Dorsolateral prefrontal cortex (tissue), 120 donors: ENCODE measurements at regions of chr19 and their contacts with region 1.

Region 1: DNA sequence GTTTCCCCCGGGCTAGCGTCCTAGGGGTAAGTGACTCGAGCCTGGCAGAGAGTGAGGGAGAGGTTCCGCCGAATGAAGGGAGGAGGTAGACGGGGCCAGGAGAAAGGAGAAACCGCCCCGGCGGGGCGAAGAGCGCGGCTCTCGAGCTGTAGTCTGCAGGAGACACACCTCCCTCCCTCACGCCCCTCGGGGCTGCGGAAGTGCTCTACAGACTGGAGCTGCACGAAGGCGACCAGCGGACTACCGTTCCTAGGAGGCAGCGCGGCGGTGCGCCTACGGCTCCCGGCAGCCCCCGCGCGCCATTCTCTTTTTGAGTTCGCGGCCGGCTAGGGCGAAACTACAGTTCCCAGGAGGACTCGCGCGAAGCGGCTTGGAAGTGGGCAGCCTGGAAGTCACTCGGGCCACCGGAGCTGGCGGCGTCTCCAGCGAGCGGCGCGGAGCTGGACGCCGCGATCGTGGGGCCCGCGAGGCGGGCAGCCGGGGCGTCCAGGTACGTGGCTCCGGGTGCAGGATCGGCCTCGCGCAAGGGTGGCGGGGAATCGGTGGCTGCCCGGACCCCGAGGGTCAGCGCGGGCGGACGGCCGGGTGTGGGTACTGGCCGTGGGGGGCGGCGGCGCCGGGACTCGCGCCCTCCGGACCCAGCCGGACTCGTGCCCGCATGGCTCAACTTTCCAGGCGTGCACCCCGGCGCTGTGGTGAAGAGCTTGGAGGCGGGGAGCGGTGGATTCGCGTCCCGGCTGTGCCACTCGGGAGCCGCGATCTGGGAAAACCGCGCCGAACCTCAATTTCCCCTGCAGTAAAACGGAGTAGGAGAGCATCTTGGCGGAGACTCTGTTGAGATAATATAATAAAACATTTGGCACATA is at the start of gene SIPA1L3:
- DNase-seq: peak; percentile 93 to 97 (median 96)
- H3K4me3 ChIP-seq: peak within 1 kb of the TSS; percentile 75 to 99 (median 94)
- H3K27ac ChIP-seq: peak within 1 kb of the TSS in 54 of 59 donors; percentile 40 to 92 (median 77)
- H3K27me3 ChIP-seq: no peaks in the 10 kb centered on the region
- CTCF ChIP-seq: peak in 44 of 56 donors; percentile 10 to 68 (median 45)
- total RNA-seq, gene SIPA1L3: 27.0 to 62.5 (median 41.4) TPM

Region 2: GRCh38 chr19:37867831-37868230 is 39.3 kb before region 1 on chr19:
- intact Hi-C with region 1: no loop called
- DNase-seq: no peak
- H3K4me3 ChIP-seq: no peak overlapping the region
- H3K27ac ChIP-seq: no peak overlapping the region
- H3K27me3 ChIP-seq: no peaks in the 10 kb centered on the region
- CTCF ChIP-seq: no peak

Region 3: GRCh38 chr19:37953533-37954303 is 46.6 kb after region 1 on chr19:
- intact Hi-C with region 1: no loop called
- DNase-seq: no peak
- H3K4me3 ChIP-seq: no peak overlapping the region
- H3K27ac ChIP-seq: peak overlapping the region in 1 of 59 donors; percentile 18
- H3K27me3 ChIP-seq: no peaks in the 10 kb centered on the region
- CTCF ChIP-seq: no peak

Region 4: DNA sequence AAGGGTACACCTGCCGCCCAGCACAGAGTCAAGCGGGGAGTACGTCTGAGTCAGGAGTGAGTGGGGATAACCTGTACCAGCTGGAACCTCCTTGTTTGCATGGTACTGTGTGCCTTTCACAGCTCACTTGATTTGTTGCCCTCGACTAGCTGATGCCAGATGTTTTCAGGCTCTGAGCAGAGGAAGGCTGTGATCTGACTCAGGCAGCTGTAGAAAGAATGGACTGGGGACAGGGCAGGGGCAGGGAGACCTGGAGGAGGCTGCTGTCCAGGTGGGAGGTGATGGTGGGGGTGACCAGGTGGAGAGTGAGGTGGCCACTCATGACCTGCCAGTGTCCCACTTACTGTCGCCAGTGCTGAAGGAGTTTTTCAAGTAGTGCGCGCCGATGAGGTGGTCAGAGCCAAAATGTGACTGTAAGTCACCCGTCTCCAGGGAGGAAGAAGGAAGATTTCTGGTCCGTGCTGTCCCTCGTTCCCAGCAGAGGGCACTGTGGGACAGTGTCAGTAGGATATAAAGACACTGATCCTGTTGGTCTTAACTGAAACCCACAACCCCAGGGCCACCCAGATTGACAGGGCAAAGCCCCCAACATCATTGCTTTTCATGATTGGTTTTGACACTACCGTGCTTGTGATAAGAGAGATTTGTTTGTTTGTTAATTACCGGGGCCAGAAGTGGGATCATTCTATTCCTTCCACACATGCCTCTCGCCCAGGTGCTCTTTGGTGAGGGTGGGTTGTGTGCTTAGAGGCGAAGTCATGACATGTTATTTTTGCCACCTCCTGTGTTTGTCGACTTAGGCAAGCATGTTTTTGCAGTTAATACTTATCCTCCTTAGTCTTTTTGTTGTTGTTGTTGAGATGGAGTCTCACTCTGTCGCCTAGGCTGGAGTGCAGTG is 188.6 kb after region 1 on chr19:
- intact Hi-C with region 1: loop called (anchors 2 to 10 kb)
- DNase-seq: peak; percentile 59 to 90 (median 80)
- H3K4me3 ChIP-seq: peak overlapping the region in 1 of 59 donors; percentile 23
- H3K27ac ChIP-seq: peak overlapping the region in 10 of 59 donors; percentile 4 to 51 (median 26)
- H3K27me3 ChIP-seq: no peaks in the 10 kb centered on the region
- CTCF ChIP-seq: peak; percentile 38 to 82 (median 70)

Region 5: GRCh38 chr19:38229585-38230073 is 322.5 kb after region 1 on chr19:
- intact Hi-C with region 1: loop called (anchors 5 kb)
- DNase-seq: peak; percentile 89 to 97 (median 96)
- H3K4me3 ChIP-seq: peak overlapping the region; percentile 51 to 80 (median 67)
- H3K27ac ChIP-seq: peak overlapping the region in 50 of 59 donors; percentile 13 to 91 (median 74)
- H3K27me3 ChIP-seq: peaks cover 0 to 5% (median 0%) of the 10 kb centered on the region in 45 donors
- CTCF ChIP-seq: peak in 47 of 56 donors; percentile 18 to 68 (median 41)

Region 6: DNA sequence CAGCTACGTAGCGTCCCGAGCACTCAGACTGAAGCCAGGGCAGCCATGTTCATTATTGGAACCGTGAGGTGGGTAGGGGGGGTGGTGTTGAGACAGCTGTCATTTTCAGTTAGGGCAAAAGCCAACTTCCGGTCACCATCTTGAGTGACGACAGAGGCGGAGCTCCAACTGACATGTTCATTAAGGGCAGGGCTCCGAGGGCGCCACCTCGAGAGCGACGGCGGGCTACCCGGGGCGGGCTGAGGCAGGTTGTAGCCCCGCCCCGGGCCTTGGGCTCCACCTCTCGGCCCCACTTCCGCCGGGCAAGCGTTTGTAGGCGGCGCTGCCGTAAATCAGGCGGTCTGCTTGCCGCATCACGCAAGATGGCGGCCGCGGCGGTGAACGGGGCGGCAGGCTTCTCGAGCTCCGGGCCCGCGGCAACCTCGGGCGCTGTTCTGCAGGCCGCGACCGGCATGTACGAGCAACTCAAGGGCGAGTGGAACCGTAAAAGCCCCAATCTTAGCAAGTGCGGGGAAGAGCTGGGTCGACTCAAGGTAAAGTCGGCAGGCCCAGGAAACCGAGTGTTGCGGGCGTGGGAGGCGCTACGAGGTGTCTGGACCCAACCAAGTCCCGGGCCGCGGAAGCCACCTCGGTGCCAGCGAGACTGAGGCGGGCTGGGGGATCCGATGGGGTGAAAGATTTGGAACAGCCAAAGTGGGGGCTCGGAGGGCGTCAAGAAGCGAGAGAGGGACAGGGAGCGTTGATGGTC is 467.5 kb after region 1 on chr19 and contains the start of gene PSMD8:
- intact Hi-C with region 1: loop called in 1 of 2 experiments (anchors 10 kb)
- DNase-seq: peak; percentile 99 to 100 (median 100)
- H3K4me3 ChIP-seq: peak within 1 kb of the TSS; percentile 63 to 99 (median 93)
- H3K27ac ChIP-seq: peak within 1 kb of the TSS; percentile 66 to 97 (median 90)
- H3K27me3 ChIP-seq: no peaks in the 10 kb centered on the region
- CTCF ChIP-seq: peak in 55 of 56 donors; percentile 17 to 87 (median 55)
- total RNA-seq, gene PSMD8: 65.8 to 185 (median 140) TPM